ENCODE measurements at regions of chr14 and their contacts with region 1.

Region 1: DNA sequence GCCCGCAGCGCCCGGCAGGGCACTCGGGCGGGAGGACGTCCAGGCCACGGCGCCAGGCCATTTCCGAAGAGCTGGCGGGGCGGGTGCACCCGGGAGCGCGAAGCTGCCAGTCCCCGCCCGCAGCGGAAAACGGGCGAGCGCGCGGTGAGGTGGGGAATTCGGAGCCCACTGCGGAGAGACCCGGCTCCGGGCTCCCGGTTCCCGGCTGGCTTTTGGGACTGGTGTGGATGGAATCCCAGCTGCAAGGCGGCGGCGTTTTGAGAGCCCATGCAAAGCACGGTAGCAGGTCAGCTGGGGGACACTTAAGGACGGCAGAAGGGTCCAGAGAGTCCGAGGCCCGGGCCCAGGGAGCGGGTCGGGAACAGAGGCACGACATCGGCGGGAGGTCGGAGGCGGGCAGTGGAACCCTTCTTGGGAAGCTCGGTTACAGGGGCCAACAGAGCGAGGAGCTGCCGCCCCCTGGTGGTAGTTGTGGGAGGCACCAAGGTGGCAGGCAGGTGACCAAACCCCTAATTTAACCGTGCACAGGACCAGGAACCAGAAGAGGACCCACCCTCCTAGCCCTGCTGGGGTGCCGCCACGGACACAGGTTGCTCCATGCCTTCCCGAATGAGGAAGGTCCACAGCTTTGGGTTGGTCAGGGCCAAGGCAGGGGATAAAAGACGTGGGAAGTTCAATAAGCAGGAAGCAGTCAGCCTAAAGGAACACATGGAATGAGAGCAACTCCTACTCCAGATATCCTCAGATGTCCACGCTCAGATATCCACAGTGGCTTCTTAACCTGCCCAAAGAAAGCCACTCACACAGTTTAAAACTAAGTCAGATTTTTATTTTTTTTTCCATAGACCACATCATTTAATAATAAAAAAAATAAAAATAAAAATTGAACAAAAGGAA is 685 bp upstream of the CDH24 start:
- DNase-seq: peak; percentile 86
- H3K4me3 ChIP-seq: peak overlapping the region; percentile 84
- H3K27ac ChIP-seq: peak overlapping the region; percentile 80
- H3K4me1 ChIP-seq: peaks cover 42% of the 10 kb centered on the region
- H3K27me3 ChIP-seq: no peaks in the 10 kb centered on the region
- CTCF ChIP-seq: peak; percentile 97

Region 2: GRCh38 chr14:22791301-22791700 is 266.7 kb before region 1 on chr14:
- intact Hi-C with region 1: no loop called
- DNase-seq: no peak
- H3K4me3 ChIP-seq: no peak overlapping the region
- H3K27ac ChIP-seq: no peak overlapping the region
- H3K4me1 ChIP-seq: no peaks in the 10 kb centered on the region
- H3K27me3 ChIP-seq: no peaks in the 10 kb centered on the region
- CTCF ChIP-seq: no peak

Region 3: GRCh38 chr14:22986508-22987054 is 71.4 kb before region 1 on chr14:
- intact Hi-C with region 1: loop called (anchors 5 kb)
- DNase-seq: peak; percentile 83
- H3K4me3 ChIP-seq: no peak overlapping the region
- H3K27ac ChIP-seq: no peak overlapping the region
- H3K4me1 ChIP-seq: peaks cover 20% of the 10 kb centered on the region
- H3K27me3 ChIP-seq: no peaks in the 10 kb centered on the region
- CTCF ChIP-seq: peak; percentile 96